Ovary (tissue), 10 donors: ENCODE measurements at regions of chr14 and their contacts with region 1.

Region 1: GRCh38 chr14:77704740-77705139 is 3.1 kb downstream of the ALKBH1 start:
- DNase-seq: no peak
- H3K4me3 ChIP-seq: no peak overlapping the region
- H3K27ac ChIP-seq: no peak overlapping the region
- H3K4me1 ChIP-seq: peaks cover 4% of the 10 kb centered on the region
- H3K27me3 ChIP-seq: no peaks in the 10 kb centered on the region
- CTCF ChIP-seq: no peak
- EP300 ChIP-seq: no peak
- POLR2A ChIP-seq: no peak

Region 2: DNA sequence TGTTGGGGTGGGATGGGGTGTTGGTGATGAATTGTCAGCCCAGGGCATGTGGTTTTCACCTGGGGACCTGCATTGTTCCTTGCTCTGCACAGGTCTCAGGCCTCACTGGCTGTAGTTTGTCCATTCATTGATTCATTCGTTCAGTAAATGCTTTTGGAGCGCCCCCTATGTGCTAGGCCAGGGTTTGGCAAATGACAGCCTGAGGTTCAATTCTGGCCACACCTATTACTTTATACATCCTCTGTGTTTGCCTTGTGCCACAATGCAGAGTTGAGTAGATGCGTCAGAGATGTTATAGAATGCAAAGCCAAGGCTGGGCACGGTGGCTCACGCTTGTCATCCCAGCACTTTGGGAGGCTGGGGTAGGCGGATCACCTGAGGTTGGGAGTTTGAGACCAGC is 99.9 kb after region 1 on chr14:
- intact Hi-C with region 1: no loop called
- DNase-seq: no peak
- H3K4me3 ChIP-seq: no peak overlapping the region
- H3K27ac ChIP-seq: no peak overlapping the region
- H3K4me1 ChIP-seq: peaks cover 4% of the 10 kb centered on the region
- H3K27me3 ChIP-seq: no peaks in the 10 kb centered on the region
- CTCF ChIP-seq: no peak
- EP300 ChIP-seq: no peak
- POLR2A ChIP-seq: no peak

Region 3: DNA sequence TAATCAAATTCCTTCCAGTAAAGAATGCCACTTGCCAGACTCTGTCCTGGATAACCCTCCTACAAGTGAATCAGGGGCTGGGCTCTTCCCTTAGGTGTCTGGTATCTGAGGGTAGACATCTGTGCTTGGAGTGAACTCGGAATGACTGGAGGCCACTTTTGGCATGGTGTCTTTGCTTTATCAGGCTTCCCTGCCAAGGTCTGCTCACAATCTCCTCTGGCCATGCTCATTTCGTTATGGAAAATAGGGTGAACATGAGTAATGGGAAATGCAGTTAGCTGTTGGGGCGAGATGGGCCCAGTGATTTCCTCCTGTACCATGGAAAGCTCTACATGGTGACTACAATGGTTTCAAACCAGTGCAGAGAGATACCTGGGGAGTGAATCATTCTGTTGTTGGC is 678.3 kb after region 1 on chr14:
- intact Hi-C with region 1: no loop called
- DNase-seq: no peak
- H3K4me3 ChIP-seq: no peak overlapping the region
- H3K27ac ChIP-seq: no peak overlapping the region
- H3K4me1 ChIP-seq: no peaks in the 10 kb centered on the region
- H3K27me3 ChIP-seq: no peaks in the 10 kb centered on the region
- CTCF ChIP-seq: no peak
- EP300 ChIP-seq: no peak
- POLR2A ChIP-seq: no peak

Region 4: DNA sequence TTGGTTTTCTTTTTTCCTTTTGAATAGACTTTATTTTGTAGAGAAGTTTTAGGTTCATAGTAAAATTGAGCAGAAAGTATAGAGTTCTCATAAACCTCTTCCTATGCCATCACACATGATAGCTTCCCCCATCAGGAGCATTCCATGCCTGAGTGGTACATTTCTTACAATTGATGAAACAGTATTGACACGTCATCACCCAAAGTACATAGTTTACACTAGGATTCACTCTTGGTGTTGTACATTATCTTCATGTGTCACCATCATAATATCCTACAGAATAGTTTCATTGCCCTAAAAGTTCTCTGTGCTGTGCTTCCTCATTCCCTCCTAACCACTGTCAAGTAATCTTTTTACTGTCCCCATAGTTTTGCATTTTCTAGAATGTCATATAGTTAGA is 1515.5 kb after region 1 on chr14:
- intact Hi-C with region 1: loop called in 1 of 4 experiments (anchors 5 kb)
- DNase-seq: no peak
- H3K4me3 ChIP-seq: no peak overlapping the region
- H3K27ac ChIP-seq: no peak overlapping the region
- H3K4me1 ChIP-seq: no peaks in the 10 kb centered on the region
- H3K27me3 ChIP-seq: no peaks in the 10 kb centered on the region
- CTCF ChIP-seq: no peak
- EP300 ChIP-seq: no peak
- POLR2A ChIP-seq: no peak